ENCODE measurements at regions of chr20 and their contacts with region 1.

Region 1: GRCh38 chr20:63056236-63056948 is 49.6 kb upstream of the BHLHE23 start:
- DNase-seq: peak; percentile 72

Region 2: GRCh38 chr20:63178889-63179686 is 122.7 kb after region 1 on chr20:
- intact Hi-C with region 1: loop called (anchors 2 kb)
- DNase-seq: no peak

Region 3: GRCh38 chr20:63216041-63216848 is 159.9 kb after region 1 on chr20 and contains the start of gene YTHDF1:
- intact Hi-C with region 1: no loop called
- DNase-seq: peak; percentile 99
- total RNA-seq, gene YTHDF1: 23.1 TPM

Region 4: DNA sequence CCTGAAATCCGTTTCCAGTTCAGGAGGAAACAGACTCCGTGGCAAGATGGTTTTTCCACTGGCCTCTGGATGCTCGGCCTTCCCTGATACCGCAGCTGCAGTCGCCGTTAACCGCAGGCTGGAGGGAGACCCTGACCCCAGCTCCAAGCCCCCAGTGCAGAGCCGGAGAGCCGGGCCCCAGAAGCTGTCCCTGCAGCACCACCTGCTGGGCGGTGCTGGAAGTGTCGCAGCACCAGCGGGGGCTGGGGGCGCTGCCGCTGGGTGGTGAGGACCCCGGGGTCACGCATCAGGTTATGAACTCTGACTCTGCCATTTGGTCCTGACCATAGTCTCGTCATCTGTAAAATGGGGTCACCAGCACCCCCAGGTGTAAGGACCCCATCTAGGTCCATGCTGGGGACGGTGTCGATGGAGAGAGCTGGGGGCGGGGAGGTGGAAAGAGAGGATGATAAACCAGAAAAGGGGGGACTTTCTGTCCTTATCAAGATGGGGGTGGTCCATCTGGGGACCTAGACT is 325.5 kb after region 1 on chr20:
- intact Hi-C with region 1: loop called (anchors 10 kb)
- DNase-seq: no peak